ENCODE measurements at regions of chr10 and their contacts with region 1.

Region 1: DNA sequence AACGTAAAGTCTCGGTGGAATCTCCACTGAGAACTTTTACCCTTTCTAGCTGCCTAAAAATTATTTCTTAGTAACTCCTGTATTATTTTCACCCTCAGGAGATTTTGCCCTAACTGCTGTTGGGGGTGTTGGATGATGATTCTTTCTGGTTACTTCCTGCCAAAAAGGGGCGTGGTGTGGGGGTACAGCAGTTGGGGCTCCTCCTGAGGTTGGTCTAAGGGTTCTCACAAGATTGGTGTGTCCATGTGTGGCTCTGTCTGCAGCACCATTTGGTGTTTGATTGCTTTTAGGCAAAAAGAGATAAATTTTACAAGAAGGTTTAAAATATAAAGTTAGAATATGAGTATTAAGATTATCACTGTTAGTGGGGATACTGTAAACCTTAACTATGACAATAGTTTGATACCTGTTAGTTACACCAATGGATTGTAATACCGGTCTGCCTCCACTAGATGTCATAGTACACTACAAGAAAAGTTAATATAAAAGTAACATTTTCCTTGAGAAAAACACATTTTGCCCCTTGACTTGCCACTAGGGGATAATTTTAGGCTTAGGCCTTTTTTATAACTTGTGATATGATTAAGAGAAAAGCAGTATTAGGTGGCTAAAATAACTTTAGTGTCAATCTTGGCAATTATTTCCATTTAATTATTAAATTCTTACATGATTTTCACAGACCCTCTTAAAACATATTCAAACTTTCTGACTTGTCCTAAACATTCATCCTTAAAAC is 928.7 kb downstream of the IPMK start:
- DNase-seq: no peak
- H3K4me3 ChIP-seq: no peak overlapping the region
- H3K27ac ChIP-seq: no peak overlapping the region
- H3K4me1 ChIP-seq: no peaks in the 10 kb centered on the region
- H3K27me3 ChIP-seq: no peaks in the 10 kb centered on the region
- CTCF ChIP-seq: peak; percentile 4 to 51 (median 47)

Region 2: DNA sequence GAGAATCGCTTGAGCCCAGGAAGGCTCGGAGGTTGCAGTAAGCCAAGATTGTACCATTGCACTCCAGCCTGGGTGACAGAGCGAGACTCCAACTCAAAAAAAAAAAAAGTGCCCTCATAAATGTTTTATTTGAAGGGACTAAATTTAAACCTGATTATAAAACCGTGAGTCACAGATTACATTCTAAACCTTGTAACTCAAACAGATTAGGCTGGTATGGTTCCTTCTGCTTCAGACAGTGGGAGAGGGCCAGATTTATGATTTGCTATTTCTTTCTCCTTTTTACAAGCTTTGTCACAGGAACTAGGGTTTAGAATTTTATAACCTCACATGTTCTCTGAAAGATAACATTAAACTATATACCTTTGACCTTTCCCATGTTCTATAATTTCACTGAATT is 176.8 kb before region 1 on chr10:
- intact Hi-C with region 1: no loop called
- DNase-seq: no peak
- H3K4me3 ChIP-seq: no peak overlapping the region
- H3K27ac ChIP-seq: no peak overlapping the region
- H3K4me1 ChIP-seq: no peaks in the 10 kb centered on the region
- H3K27me3 ChIP-seq: no peaks in the 10 kb centered on the region
- CTCF ChIP-seq: no peak

Region 3: DNA sequence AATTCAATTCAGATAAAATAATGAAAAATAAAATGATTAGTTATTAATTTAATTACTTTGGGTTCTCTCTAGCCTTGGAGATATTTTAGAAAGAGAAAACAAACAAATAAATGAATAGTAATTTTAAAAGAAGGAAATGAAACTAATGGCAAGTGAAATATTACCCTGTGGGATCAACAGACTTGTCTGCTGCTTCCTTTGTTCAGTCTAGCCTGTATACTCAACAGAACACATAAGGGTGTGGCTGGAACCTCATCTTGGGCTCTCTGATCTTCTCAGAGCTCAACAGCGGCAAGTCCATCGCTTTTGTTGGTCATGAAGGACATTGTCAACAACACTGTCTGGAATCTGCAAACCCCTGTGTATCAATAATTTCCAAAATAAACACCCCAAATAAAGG is 23.8 kb after region 1 on chr10:
- intact Hi-C with region 1: loop called (anchors 1 kb)
- DNase-seq: no peak
- H3K4me3 ChIP-seq: no peak overlapping the region
- H3K27ac ChIP-seq: no peak overlapping the region
- H3K4me1 ChIP-seq: no peaks in the 10 kb centered on the region
- H3K27me3 ChIP-seq: no peaks in the 10 kb centered on the region
- CTCF ChIP-seq: no peak

Region 4: GRCh38 chr10:58064714-58065528 is 725.9 kb after region 1 on chr10:
- intact Hi-C with region 1: loop called (anchors 10 kb)
- DNase-seq: no peak
- H3K4me3 ChIP-seq: no peak overlapping the region
- H3K27ac ChIP-seq: no peak overlapping the region
- H3K4me1 ChIP-seq: no peaks in the 10 kb centered on the region
- H3K27me3 ChIP-seq: no peaks in the 10 kb centered on the region
- CTCF ChIP-seq: peak in 2 of 3 experiments; percentile 37 to 53

Measured in ascending aorta (tissue), 2 donors.